ENCODE measurements at regions of chr9 and their contacts with region 1.

Region 1: DNA sequence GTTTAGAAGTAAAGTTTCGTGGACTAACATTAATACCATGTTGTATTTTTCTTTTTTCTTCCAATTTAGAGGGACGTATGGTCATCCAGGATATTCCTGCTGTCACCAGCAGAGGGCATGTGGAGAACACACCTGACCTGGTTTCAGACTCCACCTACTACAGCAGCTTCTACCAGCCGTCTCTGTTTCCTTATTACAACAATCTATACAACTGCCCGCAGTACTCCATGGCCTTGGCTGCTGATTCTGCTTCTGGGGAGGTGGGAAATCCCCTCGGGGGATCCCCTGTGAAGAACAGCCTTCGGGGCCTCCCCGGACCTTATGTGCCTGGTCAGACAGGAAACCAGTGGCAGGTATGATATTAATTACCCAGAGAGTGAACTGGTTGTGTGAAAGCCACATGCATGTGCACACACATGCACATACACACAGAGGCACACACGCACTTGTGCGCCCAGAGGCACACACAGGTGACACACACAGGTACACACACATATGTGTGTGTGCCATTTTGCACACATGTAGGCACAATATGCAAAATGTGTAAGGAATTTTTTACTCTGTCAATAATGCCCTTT is 52.4 kb downstream of the DMRT1 start:
- DNase-seq: peak; percentile 91
- ATAC-seq: peak; percentile 99
- H3K4me3 ChIP-seq: no peak overlapping the region
- H3K27ac ChIP-seq: no peak overlapping the region
- H3K4me1 ChIP-seq: peaks cover 11% of the 10 kb centered on the region
- H3K27me3 ChIP-seq: no peaks in the 10 kb centered on the region
- CTCF ChIP-seq: peak; percentile 76 to 96 (median 84); a peak in 5 of 6 replicates
- EP300 ChIP-seq: peak; percentile 86 to 92; a peak in 3 of 4 replicates
- POLR2A ChIP-seq: no peak
- RAD21 ChIP-seq: peak; percentile 89

Region 2: GRCh38 chr9:749716-750115 is 144.2 kb before region 1 on chr9:
- CTCF ChIA-PET with region 1: no interaction called
- POLR2A ChIA-PET with region 1: no interaction called
- RAD21 ChIA-PET with region 1: no interaction called
- SMC1A ChIA-PET with region 1: no interaction called
- in situ Hi-C with region 1: no loop called
- intact Hi-C with region 1: no loop called
- DNase-seq: no peak
- ATAC-seq: no peak
- H3K4me3 ChIP-seq: no peak overlapping the region
- H3K27ac ChIP-seq: no peak overlapping the region
- H3K4me1 ChIP-seq: no peaks in the 10 kb centered on the region
- H3K27me3 ChIP-seq: 0 out of 4 replicates have a peak, but pooled peaks cover 0 to 5% of the 10 kb centered on the region in 2 experiments
- CTCF ChIP-seq: no peak
- EP300 ChIP-seq: no peak
- POLR2A ChIP-seq: no peak
- RAD21 ChIP-seq: no peak

Region 3: GRCh38 chr9:806285-807156 is 87.4 kb before region 1 on chr9:
- CTCF ChIA-PET with region 1: no interaction called
- POLR2A ChIA-PET with region 1: no interaction called
- RAD21 ChIA-PET with region 1: no interaction called
- SMC1A ChIA-PET with region 1: interaction called, 4 read pairs
- in situ Hi-C with region 1: no loop called
- intact Hi-C with region 1: loop called (anchors 5 kb)
- DNase-seq: peak; percentile 4
- ATAC-seq: peak; percentile 83
- H3K4me3 ChIP-seq: no peak overlapping the region
- H3K27ac ChIP-seq: no peak overlapping the region
- H3K4me1 ChIP-seq: no peaks in the 10 kb centered on the region
- H3K27me3 ChIP-seq: peaks cover 0 to 2% of the 10 kb centered on the region in 2 experiments; a peak in 2 of 4 replicates
- CTCF ChIP-seq: peak; percentile 61 to 73 (median 61)
- EP300 ChIP-seq: no peak
- POLR2A ChIP-seq: no peak
- RAD21 ChIP-seq: peak; percentile 79

Region 4: DNA sequence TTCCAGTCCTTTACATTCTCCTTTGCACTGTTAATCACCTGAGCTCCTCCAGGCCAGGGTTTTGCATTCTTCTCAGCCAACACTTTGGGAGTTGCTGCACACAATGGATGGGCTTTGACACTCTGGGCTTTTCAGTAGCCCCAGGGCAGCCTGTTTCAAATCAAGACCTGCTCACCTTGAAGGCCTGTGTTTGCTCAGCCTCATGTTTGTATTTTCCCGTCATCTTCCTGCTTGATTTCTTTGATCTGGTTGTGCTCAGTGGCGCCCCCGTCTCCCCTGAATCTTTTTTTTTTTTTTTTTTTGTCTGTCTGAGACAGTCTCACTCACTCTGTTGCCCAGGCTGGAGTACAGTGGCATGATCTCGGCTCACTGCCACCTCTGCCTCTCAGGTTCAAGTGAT is 11.5 kb before region 1 on chr9:
- CTCF ChIA-PET with region 1: interaction called, 33 read pairs
- POLR2A ChIA-PET with region 1: interaction called, 3 read pairs
- RAD21 ChIA-PET with region 1: interaction called, 11 read pairs
- SMC1A ChIA-PET with region 1: interaction called, 13 read pairs
- in situ Hi-C with region 1: no loop called
- intact Hi-C with region 1: no loop called
- DNase-seq: no peak
- ATAC-seq: no peak
- H3K4me3 ChIP-seq: no peak overlapping the region
- H3K27ac ChIP-seq: no peak overlapping the region
- H3K4me1 ChIP-seq: no peaks in the 10 kb centered on the region
- H3K27me3 ChIP-seq: no peaks in the 10 kb centered on the region
- CTCF ChIP-seq: no peak
- EP300 ChIP-seq: no peak
- POLR2A ChIP-seq: no peak
- RAD21 ChIP-seq: no peak

Region 5: DNA sequence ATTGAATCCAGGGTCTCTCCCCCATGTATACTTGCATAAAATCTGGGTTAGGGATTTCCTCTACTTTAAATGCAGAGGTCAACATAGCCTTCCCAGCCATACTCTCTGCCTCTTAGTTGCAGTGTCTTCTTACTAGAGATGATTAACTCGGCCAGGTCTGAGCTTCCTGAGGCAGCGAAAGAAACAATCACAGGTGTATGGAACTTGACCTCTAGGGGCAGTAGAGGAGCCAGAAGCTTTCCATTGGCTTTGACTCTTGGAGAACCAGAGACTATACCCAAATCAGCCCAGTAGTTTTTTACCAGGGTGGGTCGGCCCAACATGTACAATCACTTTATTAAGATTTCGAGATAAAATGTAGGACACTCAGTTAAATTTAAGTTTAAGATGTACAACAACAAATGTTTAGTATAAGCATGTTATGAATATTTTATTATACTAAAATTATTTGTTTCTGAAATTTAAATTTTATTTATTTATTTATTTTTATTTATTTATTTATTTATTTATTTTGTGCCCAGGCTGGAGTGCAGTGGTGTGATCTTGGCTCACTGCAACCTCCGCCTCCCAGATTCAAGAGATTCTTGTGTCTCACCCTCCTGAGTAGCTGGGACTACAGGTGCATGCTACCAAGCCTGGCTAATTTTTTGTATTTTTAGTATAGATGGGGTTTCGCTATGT is 34.6 kb after region 1 on chr9:
- CTCF ChIA-PET with region 1: interaction called, 37 read pairs
- POLR2A ChIA-PET with region 1: no interaction called
- RAD21 ChIA-PET with region 1: interaction called, 3 read pairs
- SMC1A ChIA-PET with region 1: interaction called, 3 read pairs
- in situ Hi-C with region 1: no loop called
- intact Hi-C with region 1: no loop called
- DNase-seq: no peak
- ATAC-seq: peak; percentile 86
- H3K4me3 ChIP-seq: no peak overlapping the region
- H3K27ac ChIP-seq: no peak overlapping the region
- H3K4me1 ChIP-seq: no peaks in the 10 kb centered on the region
- H3K27me3 ChIP-seq: no peaks in the 10 kb centered on the region; a peak in 1 of 4 replicates
- CTCF ChIP-seq: peak; percentile 25 to 64 (median 62); a peak in 5 of 6 replicates
- EP300 ChIP-seq: no peak
- POLR2A ChIP-seq: no peak
- RAD21 ChIP-seq: no peak

Region 6: GRCh38 chr9:994005-994404 is 100.1 kb after region 1 on chr9:
- CTCF ChIA-PET with region 1: interaction called, 54 read pairs
- POLR2A ChIA-PET with region 1: no interaction called
- RAD21 ChIA-PET with region 1: interaction called, 7 read pairs
- SMC1A ChIA-PET with region 1: interaction called, 9 read pairs
- in situ Hi-C with region 1: no loop called
- intact Hi-C with region 1: loop called (anchors 1 kb)
- DNase-seq: no peak
- ATAC-seq: peak; percentile 81
- H3K4me3 ChIP-seq: no peak overlapping the region
- H3K27ac ChIP-seq: no peak overlapping the region
- H3K4me1 ChIP-seq: peaks cover 6% of the 10 kb centered on the region
- H3K27me3 ChIP-seq: 0 out of 4 replicates have a peak, but pooled peaks cover 0 to 2% of the 10 kb centered on the region in 2 experiments
- CTCF ChIP-seq: no peak
- EP300 ChIP-seq: no peak
- POLR2A ChIP-seq: no peak
- RAD21 ChIP-seq: no peak

Region 7: GRCh38 chr9:1298027-1298426 is 404.1 kb after region 1 on chr9:
- CTCF ChIA-PET with region 1: no interaction called
- POLR2A ChIA-PET with region 1: no interaction called
- RAD21 ChIA-PET with region 1: no interaction called
- SMC1A ChIA-PET with region 1: no interaction called
- in situ Hi-C with region 1: no loop called
- intact Hi-C with region 1: no loop called
- DNase-seq: no peak
- ATAC-seq: no peak
- H3K4me3 ChIP-seq: no peak overlapping the region
- H3K27ac ChIP-seq: no peak overlapping the region
- H3K4me1 ChIP-seq: no peaks in the 10 kb centered on the region
- H3K27me3 ChIP-seq: no peaks in the 10 kb centered on the region; a peak in 1 of 4 replicates
- CTCF ChIP-seq: no peak
- EP300 ChIP-seq: no peak
- POLR2A ChIP-seq: no peak
- RAD21 ChIP-seq: no peak

Region 8: DNA sequence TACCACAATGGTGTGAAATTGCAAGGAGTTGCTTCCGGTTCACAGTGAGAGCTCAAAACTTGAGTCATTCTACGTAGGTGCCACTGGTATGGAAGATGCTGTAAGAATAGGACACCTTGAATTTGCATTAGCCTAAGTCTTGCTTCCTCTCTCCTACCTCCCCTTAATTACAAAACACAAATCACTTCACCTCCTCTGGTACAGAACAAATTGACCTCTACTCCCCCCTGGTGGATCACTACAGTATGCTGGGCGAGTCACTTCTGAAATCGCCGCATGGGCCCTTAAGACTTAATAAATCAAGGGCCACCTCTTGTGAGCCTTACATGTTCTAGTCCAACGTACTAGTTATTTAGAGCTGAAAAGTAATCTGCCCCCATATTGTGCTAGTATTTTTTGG is 975.9 kb after region 1 on chr9:
- CTCF ChIA-PET with region 1: no interaction called
- POLR2A ChIA-PET with region 1: no interaction called
- RAD21 ChIA-PET with region 1: no interaction called
- SMC1A ChIA-PET with region 1: no interaction called
- in situ Hi-C with region 1: no loop called
- intact Hi-C with region 1: loop called (anchors 10 kb)
- DNase-seq: no peak
- ATAC-seq: peak; percentile 82
- H3K4me3 ChIP-seq: no peak overlapping the region
- H3K27ac ChIP-seq: 0 out of 2 replicates have a peak overlapping the region, but pooled peaks have one; percentile 14
- H3K4me1 ChIP-seq: peaks cover 28% of the 10 kb centered on the region
- H3K27me3 ChIP-seq: no peaks in the 10 kb centered on the region
- CTCF ChIP-seq: peak; percentile 53 to 72 (median 62)
- EP300 ChIP-seq: no peak
- POLR2A ChIP-seq: no peak
- RAD21 ChIP-seq: peak; percentile 91